Activated CD8-positive, alpha-beta memory T cell treated with anti-CD3 and anti-CD28 coated beads, Interleukin-2, amount 10 ng/mL, durations not matched to agents 7 days and 5 days (primary cell): ENCODE measurements at regions of chr7 and their contacts with region 1.

Region 1: DNA sequence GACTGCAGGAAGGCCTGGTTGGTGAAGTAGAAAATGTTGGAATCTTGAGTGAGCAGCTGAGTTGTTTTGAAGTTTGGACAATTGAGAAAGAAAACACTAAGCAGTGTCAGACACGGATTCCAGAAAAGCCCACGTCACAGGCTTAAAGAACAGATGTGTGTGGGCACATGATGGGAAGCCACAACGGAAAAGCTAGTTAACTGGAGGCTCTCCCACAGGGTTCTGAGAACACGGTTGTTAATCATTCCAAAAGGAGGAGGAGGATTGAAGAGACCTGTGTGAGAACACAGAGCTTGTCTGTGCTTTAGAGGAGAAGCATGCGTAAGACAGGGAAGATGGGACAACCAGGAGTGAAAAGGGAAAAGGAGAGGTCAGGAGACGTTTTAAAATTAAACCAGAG is 42.6 kb downstream of the SHH start:
- DNase-seq: no peak
- ATAC-seq: no peak
- H3K4me3 Mint-ChIP-seq: no peak overlapping the region
- H3K27ac Mint-ChIP-seq: no peak overlapping the region
- H3K4me1 Mint-ChIP-seq: peaks cover 21% of the 10 kb centered on the region
- H3K27me3 Mint-ChIP-seq: no peaks in the 10 kb centered on the region

Region 2: GRCh38 chr7:155509725-155510551 is 259.8 kb before region 1 on chr7:
- CTCF ChIA-PET with region 1: no interaction called
- DNase-seq: no peak
- ATAC-seq: no peak
- H3K4me3 Mint-ChIP-seq: peak overlapping the region; percentile 26
- H3K27ac Mint-ChIP-seq: peak overlapping the region; percentile 45
- H3K4me1 Mint-ChIP-seq: peaks cover 13% of the 10 kb centered on the region
- H3K27me3 Mint-ChIP-seq: peaks cover 82% of the 10 kb centered on the region

Region 3: GRCh38 chr7:155738652-155739537 is 30.8 kb before region 1 on chr7:
- CTCF ChIA-PET with region 1: interaction called, 10 read pairs
- DNase-seq: peak; percentile 83
- ATAC-seq: peak; percentile 34
- H3K4me3 Mint-ChIP-seq: peak overlapping the region; percentile 40
- H3K27ac Mint-ChIP-seq: peak overlapping the region; percentile 50
- H3K4me1 Mint-ChIP-seq: peaks cover 49% of the 10 kb centered on the region
- H3K27me3 Mint-ChIP-seq: no peaks in the 10 kb centered on the region

Region 4: GRCh38 chr7:155815332-155816191 is 45.9 kb after region 1 on chr7:
- CTCF ChIA-PET with region 1: no interaction called
- DNase-seq: peak; percentile 75
- ATAC-seq: peak; percentile 79
- H3K4me3 Mint-ChIP-seq: no peak overlapping the region
- H3K27ac Mint-ChIP-seq: peak overlapping the region; percentile 48
- H3K4me1 Mint-ChIP-seq: peaks cover 7% of the 10 kb centered on the region
- H3K27me3 Mint-ChIP-seq: peaks cover 42% of the 10 kb centered on the region